ENCODE measurements at regions of chr12 and their contacts with region 1.

Region 1: DNA sequence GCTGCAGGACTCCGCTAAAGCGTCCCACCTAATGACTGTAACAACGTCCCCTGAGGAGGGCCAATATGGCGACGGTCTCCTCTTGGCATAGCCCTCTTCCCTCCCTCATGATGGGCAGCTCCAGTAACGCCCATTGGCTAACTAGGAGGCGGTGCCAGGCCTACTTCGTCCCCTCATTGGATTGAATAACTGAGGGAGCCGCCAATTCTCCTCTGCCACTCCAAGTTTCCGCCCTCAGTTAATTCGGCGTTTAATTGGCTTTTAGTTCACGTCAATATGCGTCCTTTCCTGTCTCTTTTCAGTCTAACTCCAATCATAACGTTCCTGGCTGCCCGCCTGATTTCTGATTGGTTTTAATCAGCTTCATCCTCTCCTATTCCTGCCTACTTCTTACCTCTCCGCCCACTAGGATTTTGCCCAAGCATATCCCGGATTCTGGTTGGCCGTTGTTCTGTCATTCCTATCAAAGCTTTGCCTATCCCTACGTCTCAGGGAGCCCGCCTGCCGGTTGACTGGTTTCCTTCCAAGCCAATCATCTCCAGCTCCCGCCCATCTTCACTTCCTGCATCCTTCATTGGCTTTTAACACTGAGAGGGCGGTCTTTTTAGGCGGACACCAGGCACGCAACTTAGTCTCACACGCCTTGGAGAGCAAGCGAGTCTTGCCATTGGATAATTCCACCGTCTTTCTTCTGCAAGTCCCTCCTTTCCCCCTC is 430 bp upstream of the SP1 start:
- DNase-seq: peak in 8 of 9 experiments; percentile 79 to 100 (median 92)
- ATAC-seq: peak; percentile 73
- H3K4me3 ChIP-seq: peak overlapping the region; percentile 64 to 65
- H3K4me3 Mint-ChIP-seq: no peak overlapping the region
- H3K27ac ChIP-seq: peak overlapping the region; percentile 61 to 83
- H3K27ac Mint-ChIP-seq: no peak overlapping the region
- H3K4me1 ChIP-seq: peaks cover 44% of the 10 kb centered on the region
- H3K4me1 Mint-ChIP-seq: peaks cover 35% of the 10 kb centered on the region
- H3K27me3 ChIP-seq: no peaks in the 10 kb centered on the region
- H3K27me3 Mint-ChIP-seq: no peaks in the 10 kb centered on the region
- CTCF ChIP-seq: no peak

Region 2: GRCh38 chr12:53295070-53295890 is 84.3 kb before region 1 on chr12 and contains the start of gene PFDN5:
- CTCF ChIA-PET with region 1: no interaction called
- POLR2A ChIA-PET with region 1: interaction called, 8 read pairs
- intact Hi-C with region 1: loop called in 1 of 2 experiments (anchors 1 kb)
- DNase-seq: peak; percentile 72 to 95 (median 87)
- ATAC-seq: peak; percentile 92
- H3K4me3 ChIP-seq: peak within 1 kb of the TSS; percentile 75 to 88
- H3K4me3 Mint-ChIP-seq: peak within 1 kb of the TSS; percentile 99
- H3K27ac ChIP-seq: peak within 1 kb of the TSS; percentile 80 to 82
- H3K27ac Mint-ChIP-seq: peak within 1 kb of the TSS; percentile 99
- H3K4me1 ChIP-seq: peaks cover 28% of the 10 kb centered on the region
- H3K4me1 Mint-ChIP-seq: peaks cover 51% of the 10 kb centered on the region
- H3K27me3 ChIP-seq: no peaks in the 10 kb centered on the region
- H3K27me3 Mint-ChIP-seq: no peaks in the 10 kb centered on the region
- CTCF ChIP-seq: no peak
- total RNA-seq, gene PFDN5: 741 to 751 TPM

Region 3: GRCh38 chr12:53352331-53353256 is 27.0 kb before region 1 on chr12:
- CTCF ChIA-PET with region 1: interaction called, 44 read pairs
- POLR2A ChIA-PET with region 1: interaction called, 4 read pairs
- intact Hi-C with region 1: loop called (anchors 1 kb)
- DNase-seq: peak; percentile 67 to 92 (median 82)
- ATAC-seq: peak; percentile 100
- H3K4me3 ChIP-seq: no peak overlapping the region
- H3K4me3 Mint-ChIP-seq: no peak overlapping the region
- H3K27ac ChIP-seq: no peak overlapping the region
- H3K27ac Mint-ChIP-seq: peak overlapping the region; percentile 8
- H3K4me1 ChIP-seq: no peaks in the 10 kb centered on the region
- H3K4me1 Mint-ChIP-seq: peaks cover 6% of the 10 kb centered on the region
- H3K27me3 ChIP-seq: no peaks in the 10 kb centered on the region
- H3K27me3 Mint-ChIP-seq: no peaks in the 10 kb centered on the region
- CTCF ChIP-seq: peak; percentile 75

Region 4: DNA sequence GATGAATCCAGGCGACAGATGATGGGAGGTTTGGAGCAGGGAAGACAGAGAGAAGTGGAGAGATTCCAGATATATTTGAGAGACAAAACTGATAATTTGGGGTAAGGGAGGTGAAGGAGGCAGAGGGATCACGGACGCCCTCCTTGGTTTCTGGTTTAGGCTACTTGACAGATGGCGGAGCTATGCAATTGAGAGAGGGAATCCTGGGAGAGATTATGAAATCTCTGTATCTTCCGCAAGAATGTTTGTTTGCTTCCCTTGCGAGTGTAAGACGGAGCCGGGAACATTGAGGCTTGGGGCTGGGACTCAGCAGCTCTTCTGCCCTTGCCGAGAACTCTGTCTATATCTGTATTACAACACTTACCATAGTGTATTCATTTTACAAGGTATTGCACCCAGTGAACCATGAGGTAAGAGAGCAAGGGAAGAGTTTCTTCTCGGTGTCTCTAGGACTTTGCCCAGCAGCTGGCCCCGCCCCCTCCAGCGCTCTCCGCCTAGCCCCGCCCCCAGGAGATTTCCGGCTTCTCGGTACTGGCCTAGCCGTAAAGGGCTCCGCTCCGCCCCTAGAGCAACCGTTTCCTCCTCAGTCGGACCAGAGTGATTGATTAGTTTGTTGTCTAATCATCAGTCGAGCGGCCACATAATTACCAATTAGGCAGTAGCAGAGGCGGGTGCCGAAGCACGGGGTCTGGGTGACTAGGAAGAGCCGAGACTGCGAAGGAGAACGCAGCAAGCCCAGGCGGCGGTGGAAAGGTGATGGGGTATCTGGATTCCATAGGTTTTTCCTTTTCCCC is 61.7 kb after region 1 on chr12 and contains the start of gene PRR13:
- CTCF ChIA-PET with region 1: no interaction called
- POLR2A ChIA-PET with region 1: interaction called, 12 read pairs
- intact Hi-C with region 1: loop called (anchors 1 kb)
- DNase-seq: peak; percentile 95 to 99 (median 99)
- ATAC-seq: peak; percentile 95
- H3K4me3 ChIP-seq: peak within 1 kb of the TSS; percentile 86 to 98
- H3K4me3 Mint-ChIP-seq: peak within 1 kb of the TSS; percentile 97
- H3K27ac ChIP-seq: peak within 1 kb of the TSS; percentile 85 to 94
- H3K27ac Mint-ChIP-seq: peak within 1 kb of the TSS; percentile 97
- H3K4me1 ChIP-seq: peaks cover 36% of the 10 kb centered on the region
- H3K4me1 Mint-ChIP-seq: peaks cover 46% of the 10 kb centered on the region
- H3K27me3 ChIP-seq: no peaks in the 10 kb centered on the region
- H3K27me3 Mint-ChIP-seq: no peaks in the 10 kb centered on the region
- CTCF ChIP-seq: no peak
- total RNA-seq, gene PRR13: 131 to 155 TPM

Region 5: GRCh38 chr12:53508534-53509199 is 129.1 kb after region 1 on chr12:
- CTCF ChIA-PET with region 1: interaction called, 4 read pairs
- POLR2A ChIA-PET with region 1: no interaction called
- intact Hi-C with region 1: loop called in 1 of 2 experiments (anchors 2 kb)
- DNase-seq: peak; percentile 64 to 90 (median 83)
- ATAC-seq: peak; percentile 100
- H3K4me3 ChIP-seq: no peak overlapping the region
- H3K4me3 Mint-ChIP-seq: no peak overlapping the region
- H3K27ac ChIP-seq: peak overlapping the region in 1 of 2 experiments; percentile 17
- H3K27ac Mint-ChIP-seq: no peak overlapping the region
- H3K4me1 ChIP-seq: peaks cover 9% of the 10 kb centered on the region
- H3K4me1 Mint-ChIP-seq: peaks cover 5% of the 10 kb centered on the region
- H3K27me3 ChIP-seq: no peaks in the 10 kb centered on the region
- H3K27me3 Mint-ChIP-seq: no peaks in the 10 kb centered on the region
- CTCF ChIP-seq: peak; percentile 84